Natural killer cell (primary cell): ENCODE measurements at regions of chr21 and their contacts with region 1.

Region 1: DNA sequence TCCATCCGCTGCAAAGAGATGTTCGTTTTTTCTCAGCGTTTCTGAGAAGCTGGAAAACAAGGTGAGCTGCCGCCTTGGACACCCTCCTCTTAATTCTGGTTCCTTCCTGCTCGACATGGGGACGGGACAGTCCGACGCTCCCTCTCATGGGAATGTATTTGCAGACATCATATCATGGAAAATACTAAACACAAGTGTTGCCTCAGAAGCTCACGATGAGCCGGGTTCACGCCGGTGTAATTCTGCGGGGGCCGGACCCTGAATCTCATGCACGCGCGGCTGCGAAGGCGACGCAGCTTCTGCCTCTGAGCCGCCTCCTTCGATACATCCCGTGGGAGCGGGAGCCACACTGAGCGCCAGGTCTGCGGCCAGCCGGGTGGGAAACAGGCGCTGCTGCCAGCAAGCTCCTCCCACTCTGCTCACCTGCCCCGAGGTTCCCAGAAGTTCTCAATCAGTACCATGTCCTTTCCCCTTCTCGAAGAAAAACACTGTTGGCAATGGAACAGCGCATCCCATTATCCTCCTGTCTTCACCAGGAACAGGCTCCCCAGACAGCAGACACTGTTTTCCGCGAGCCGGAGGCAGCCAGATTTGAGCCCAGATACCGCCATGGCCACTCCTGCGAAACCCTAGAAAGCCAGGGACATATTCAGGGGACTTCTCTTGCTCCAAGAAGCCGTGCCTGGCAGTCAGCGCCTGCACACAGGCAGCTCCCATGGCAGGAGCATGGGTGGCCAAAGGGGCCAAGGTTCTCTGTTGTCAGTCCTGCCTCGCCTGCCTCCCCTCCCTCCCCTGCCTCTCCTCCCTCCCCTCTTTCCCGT is 98.0 kb downstream of the WDR4 start:
- DNase-seq: peak in 1 of 2 donors; percentile 18
- ATAC-seq: no peak
- H3K4me3 ChIP-seq: no peak overlapping the region
- H3K4me3 Mint-ChIP-seq: no peak overlapping the region
- H3K27ac ChIP-seq: no peak overlapping the region
- H3K27ac Mint-ChIP-seq: peak overlapping the region in 1 of 2 donors; percentile 100
- H3K4me1 ChIP-seq: peaks cover 37% of the 10 kb centered on the region
- H3K4me1 Mint-ChIP-seq: peaks cover 28 to 38% of the 10 kb centered on the region in 2 donors
- H3K27me3 ChIP-seq: no peaks in the 10 kb centered on the region
- H3K27me3 Mint-ChIP-seq: peaks cover 0 to 15% of the 10 kb centered on the region in 2 donors
- CTCF ChIP-seq: no peak

Region 2: DNA sequence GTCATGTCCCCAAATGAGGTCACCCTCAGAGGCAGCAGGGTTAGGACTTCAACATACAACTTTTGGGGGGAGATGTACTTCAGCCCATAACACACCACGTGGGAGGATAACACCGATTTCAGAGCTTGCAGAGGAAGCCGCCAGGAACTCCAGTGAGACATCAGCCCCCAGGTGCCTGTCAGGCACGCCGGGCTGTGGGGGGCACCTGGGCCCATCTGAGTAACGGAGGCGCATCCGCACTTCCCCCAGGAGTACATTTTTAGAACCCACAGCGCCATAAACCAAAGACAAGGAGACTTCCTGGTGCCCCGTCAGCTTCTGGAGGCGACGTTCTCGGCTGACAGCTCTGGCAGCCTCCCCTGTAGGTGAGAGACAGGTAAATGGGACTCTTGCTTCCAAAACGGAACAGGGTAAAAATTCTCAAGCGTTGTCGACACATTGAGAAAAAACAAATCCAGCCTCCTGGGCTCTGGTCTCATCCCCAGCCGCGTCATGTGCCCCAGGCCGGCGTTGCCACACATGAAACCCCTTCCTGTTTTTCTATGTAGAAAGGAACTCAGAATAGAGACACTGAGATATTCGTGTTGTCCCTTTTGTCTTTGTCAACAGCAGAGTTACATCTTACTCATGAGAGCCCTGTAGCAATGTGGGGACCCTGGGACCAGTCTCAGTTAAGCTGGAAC is 34.6 kb before region 1 on chr21:
- intact Hi-C with region 1: loop called (anchors 5 kb)
- DNase-seq: peak in 1 of 2 donors; percentile 74
- ATAC-seq: peak; percentile 68 to 76 (median 72)
- H3K4me3 ChIP-seq: peak overlapping the region; percentile 22
- H3K4me3 Mint-ChIP-seq: peak overlapping the region; percentile 72
- H3K27ac ChIP-seq: peak overlapping the region; percentile 57
- H3K27ac Mint-ChIP-seq: peak overlapping the region; percentile 78 to 84
- H3K4me1 ChIP-seq: peaks cover 27% of the 10 kb centered on the region
- H3K4me1 Mint-ChIP-seq: peaks cover 14 to 19% of the 10 kb centered on the region in 2 donors
- H3K27me3 ChIP-seq: no peaks in the 10 kb centered on the region
- H3K27me3 Mint-ChIP-seq: no peaks in the 10 kb centered on the region
- CTCF ChIP-seq: no peak